ENCODE measurements at regions of chr15 and their contacts with region 1.

Region 1: DNA sequence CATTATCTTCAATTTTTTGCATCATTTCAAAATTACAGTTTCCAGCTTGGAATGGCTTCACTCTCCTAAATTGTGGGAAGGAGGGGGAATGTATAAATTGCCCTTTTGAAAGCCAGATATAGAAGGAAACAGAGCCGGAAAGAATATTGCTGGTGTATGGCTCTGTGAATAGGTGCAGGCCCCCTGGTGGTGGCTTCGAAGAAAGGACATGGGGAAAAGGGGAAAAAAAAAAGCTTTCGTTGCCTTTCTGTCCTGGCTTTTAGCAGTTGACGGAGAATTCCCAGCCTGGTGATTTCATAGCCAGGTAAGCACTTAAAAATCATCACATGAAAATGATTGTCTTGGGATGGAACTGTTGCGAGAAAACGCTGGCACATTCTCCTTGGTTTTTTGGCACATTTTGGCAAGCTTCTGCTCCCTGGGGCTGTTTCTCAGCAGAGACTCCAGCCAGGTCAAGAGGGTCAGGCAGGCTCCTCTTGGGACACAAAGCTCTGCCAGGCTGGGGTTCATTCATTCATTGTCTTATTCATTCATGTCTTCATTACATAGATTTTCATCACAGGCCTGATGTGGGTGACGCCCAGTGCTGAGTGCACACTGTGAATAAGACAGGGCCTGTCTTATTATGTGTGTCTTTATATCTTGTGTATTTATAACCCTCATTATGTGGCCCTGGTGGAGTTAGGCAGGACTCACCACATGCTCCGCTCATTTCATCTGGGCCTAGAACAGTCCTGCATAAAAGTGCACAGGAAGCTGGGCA is 300.0 kb upstream of the TPM1 start:
- DNase-seq: no peak
- H3K4me3 ChIP-seq: no peak overlapping the region
- H3K27ac ChIP-seq: no peak overlapping the region
- H3K4me1 ChIP-seq: peaks cover 0 to 6% (median 2%) of the 10 kb centered on the region in 4 experiments; a peak in 3 of 7 replicates
- H3K27me3 ChIP-seq: no peaks in the 10 kb centered on the region
- CTCF ChIP-seq: peak; percentile 49 to 77 (median 70)
- EP300 ChIP-seq: no peak
- POLR2A ChIP-seq: no peak
- RAD21 ChIP-seq: peak; percentile 56 to 58

Region 2: GRCh38 chr15:62495670-62496614 is 246.6 kb before region 1 on chr15:
- CTCF ChIA-PET with region 1: no interaction called
- POLR2A ChIA-PET with region 1: no interaction called
- DNase-seq: no peak
- H3K4me3 ChIP-seq: no peak overlapping the region
- H3K27ac ChIP-seq: no peak overlapping the region
- H3K4me1 ChIP-seq: no peaks in the 10 kb centered on the region; a peak in 1 of 7 replicates
- H3K27me3 ChIP-seq: no peaks in the 10 kb centered on the region
- CTCF ChIP-seq: no peak
- EP300 ChIP-seq: no peak
- POLR2A ChIP-seq: no peak
- RAD21 ChIP-seq: no peak

Region 3: GRCh38 chr15:62706317-62706716 is 36.3 kb before region 1 on chr15:
- CTCF ChIA-PET with region 1: interaction called, 10 read pairs
- POLR2A ChIA-PET with region 1: no interaction called
- DNase-seq: no peak
- H3K4me3 ChIP-seq: no peak overlapping the region
- H3K27ac ChIP-seq: no peak overlapping the region
- H3K4me1 ChIP-seq: peaks cover 0 to 5% (median 0%) of the 10 kb centered on the region in 4 experiments; a peak in 2 of 7 replicates
- H3K27me3 ChIP-seq: no peaks in the 10 kb centered on the region
- CTCF ChIP-seq: no peak
- EP300 ChIP-seq: no peak
- POLR2A ChIP-seq: no peak
- RAD21 ChIP-seq: no peak

Region 4: DNA sequence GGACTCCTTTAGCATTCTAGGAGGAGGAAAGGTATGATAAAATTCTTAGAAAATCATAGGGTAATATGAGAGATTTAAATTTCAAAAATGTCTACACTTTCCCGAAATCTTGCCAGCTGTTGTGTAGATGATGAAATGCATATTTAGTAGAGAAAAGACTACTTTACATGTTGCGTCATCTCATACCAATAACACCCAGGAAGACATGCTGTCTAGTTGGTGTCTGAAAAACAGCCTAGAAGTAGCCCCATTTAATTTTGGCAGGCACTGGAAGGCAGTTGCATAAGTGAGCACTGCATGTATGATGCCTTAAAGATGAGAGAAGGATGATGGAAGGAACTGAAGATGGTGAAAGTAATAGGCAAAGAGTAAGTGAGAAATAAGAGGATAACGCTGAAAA is 10.5 kb before region 1 on chr15:
- CTCF ChIA-PET with region 1: interaction called, 41 read pairs
- POLR2A ChIA-PET with region 1: no interaction called
- DNase-seq: no peak
- H3K4me3 ChIP-seq: no peak overlapping the region
- H3K27ac ChIP-seq: no peak overlapping the region
- H3K4me1 ChIP-seq: peaks cover 0 to 6% (median 5%) of the 10 kb centered on the region in 4 experiments; a peak in 5 of 7 replicates
- H3K27me3 ChIP-seq: no peaks in the 10 kb centered on the region
- CTCF ChIP-seq: no peak
- EP300 ChIP-seq: no peak
- POLR2A ChIP-seq: no peak
- RAD21 ChIP-seq: no peak

Region 5: GRCh38 chr15:62758126-62758951 is 15.7 kb after region 1 on chr15:
- CTCF ChIA-PET with region 1: interaction called, 49 read pairs
- POLR2A ChIA-PET with region 1: interaction called, 3 read pairs
- DNase-seq: no peak
- H3K4me3 ChIP-seq: 0 out of 8 replicates have a peak overlapping the region, but pooled peaks of 1 of the 4 experiments have one; percentile 3
- H3K27ac ChIP-seq: no peak overlapping the region; the same call in 1 of the 2 replicates
- H3K4me1 ChIP-seq: peaks cover 11 to 25% (median 18%) of the 10 kb centered on the region in 4 experiments
- H3K27me3 ChIP-seq: no peaks in the 10 kb centered on the region
- CTCF ChIP-seq: no peak
- EP300 ChIP-seq: no peak; a peak in 1 of 3 replicates
- POLR2A ChIP-seq: no peak
- RAD21 ChIP-seq: no peak

Region 6: GRCh38 chr15:62766599-62766998 is 24.0 kb after region 1 on chr15:
- CTCF ChIA-PET with region 1: interaction called, 14 read pairs
- POLR2A ChIA-PET with region 1: no interaction called
- DNase-seq: no peak
- H3K4me3 ChIP-seq: no peak overlapping the region
- H3K27ac ChIP-seq: no peak overlapping the region
- H3K4me1 ChIP-seq: no peaks in the 10 kb centered on the region
- H3K27me3 ChIP-seq: no peaks in the 10 kb centered on the region
- CTCF ChIP-seq: no peak
- EP300 ChIP-seq: no peak
- POLR2A ChIP-seq: no peak
- RAD21 ChIP-seq: no peak

Region 7: GRCh38 chr15:63221346-63221745 is 478.8 kb after region 1 on chr15:
- CTCF ChIA-PET with region 1: no interaction called
- POLR2A ChIA-PET with region 1: no interaction called
- DNase-seq: no peak
- H3K4me3 ChIP-seq: no peak overlapping the region
- H3K27ac ChIP-seq: no peak overlapping the region
- H3K4me1 ChIP-seq: peaks cover 0 to 7% (median 0%) of the 10 kb centered on the region in 4 experiments; a peak in 1 of 7 replicates
- H3K27me3 ChIP-seq: no peaks in the 10 kb centered on the region
- CTCF ChIP-seq: no peak
- EP300 ChIP-seq: no peak
- POLR2A ChIP-seq: no peak
- RAD21 ChIP-seq: no peak